ENCODE measurements at regions of chr4 and their contacts with region 1.

Region 1: DNA sequence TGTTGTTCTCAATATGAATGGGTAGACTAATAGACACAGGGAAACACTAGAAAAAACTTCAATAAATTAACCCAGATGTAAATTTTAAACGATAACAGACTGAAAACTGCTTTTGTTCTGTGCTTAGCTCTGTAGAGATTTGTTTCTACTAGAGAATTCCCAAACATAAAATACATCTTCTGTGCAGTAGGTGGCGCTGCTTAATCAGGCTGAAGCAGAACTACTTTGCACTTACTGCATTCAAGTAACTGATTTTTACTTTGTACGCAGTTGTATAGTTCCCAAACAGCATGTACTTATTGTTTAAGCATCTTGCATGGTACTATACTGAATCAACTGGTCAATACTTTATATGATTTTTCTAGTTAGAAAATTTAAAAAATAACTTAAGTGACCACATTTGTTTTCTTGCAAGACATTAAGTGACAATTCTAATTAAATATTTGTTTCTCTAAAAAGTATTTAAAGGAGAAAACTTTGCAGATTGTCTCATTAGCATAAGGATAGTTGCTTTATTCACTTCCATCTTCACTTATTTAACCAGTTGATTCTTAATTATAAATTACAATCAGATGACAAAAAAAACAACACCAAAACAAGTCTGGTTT is 490.6 kb downstream of the IL15 start:
- DNase-seq: peak in 4 of 10 donors; percentile 20 to 52 (median 38)

Region 2: GRCh38 chr4:142846729-142847596 is 720.0 kb after region 1 on chr4:
- intact Hi-C with region 1: loop called (anchors 2 kb)
- DNase-seq: peak in 9 of 10 donors; percentile 14 to 92 (median 67)

Region 3: DNA sequence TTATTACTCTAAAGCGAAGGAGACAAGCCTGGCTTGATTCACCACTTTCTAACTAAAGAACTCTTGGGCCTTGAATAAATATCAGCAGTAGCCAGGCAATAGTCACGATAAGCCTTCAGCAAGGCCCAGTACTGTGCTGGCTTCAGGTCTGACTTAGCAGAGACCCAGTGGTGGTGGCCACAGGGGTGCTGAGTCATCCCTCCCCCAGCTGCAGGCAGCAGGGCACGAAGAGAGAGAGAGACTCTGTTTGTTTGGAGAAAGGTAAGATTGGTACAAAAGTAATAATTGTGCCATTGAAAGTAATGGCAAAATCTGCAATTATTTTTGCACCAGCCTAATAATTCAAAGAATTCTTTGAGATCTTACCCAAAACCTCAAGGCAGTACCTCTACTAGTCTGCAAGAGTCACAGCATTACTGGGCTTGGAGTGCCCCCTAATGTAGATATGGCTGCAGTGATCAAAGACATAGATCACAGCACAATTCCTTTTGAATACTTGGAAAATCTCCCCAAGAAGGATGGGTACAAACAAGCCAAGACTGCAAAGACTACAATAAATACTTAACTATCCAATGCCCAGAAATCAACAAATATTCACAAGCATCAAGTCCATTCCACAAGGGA is 898.2 kb after region 1 on chr4:
- intact Hi-C with region 1: loop called (anchors 10 kb)
- DNase-seq: no peak

Region 4: GRCh38 chr4:143085224-143085623 is 958.2 kb after region 1 on chr4:
- intact Hi-C with region 1: loop called (anchors 10 kb)
- DNase-seq: no peak